CD8-positive, alpha-beta T cell (primary cell): ENCODE measurements at regions of chr3 and their contacts with region 1.

Region 1: DNA sequence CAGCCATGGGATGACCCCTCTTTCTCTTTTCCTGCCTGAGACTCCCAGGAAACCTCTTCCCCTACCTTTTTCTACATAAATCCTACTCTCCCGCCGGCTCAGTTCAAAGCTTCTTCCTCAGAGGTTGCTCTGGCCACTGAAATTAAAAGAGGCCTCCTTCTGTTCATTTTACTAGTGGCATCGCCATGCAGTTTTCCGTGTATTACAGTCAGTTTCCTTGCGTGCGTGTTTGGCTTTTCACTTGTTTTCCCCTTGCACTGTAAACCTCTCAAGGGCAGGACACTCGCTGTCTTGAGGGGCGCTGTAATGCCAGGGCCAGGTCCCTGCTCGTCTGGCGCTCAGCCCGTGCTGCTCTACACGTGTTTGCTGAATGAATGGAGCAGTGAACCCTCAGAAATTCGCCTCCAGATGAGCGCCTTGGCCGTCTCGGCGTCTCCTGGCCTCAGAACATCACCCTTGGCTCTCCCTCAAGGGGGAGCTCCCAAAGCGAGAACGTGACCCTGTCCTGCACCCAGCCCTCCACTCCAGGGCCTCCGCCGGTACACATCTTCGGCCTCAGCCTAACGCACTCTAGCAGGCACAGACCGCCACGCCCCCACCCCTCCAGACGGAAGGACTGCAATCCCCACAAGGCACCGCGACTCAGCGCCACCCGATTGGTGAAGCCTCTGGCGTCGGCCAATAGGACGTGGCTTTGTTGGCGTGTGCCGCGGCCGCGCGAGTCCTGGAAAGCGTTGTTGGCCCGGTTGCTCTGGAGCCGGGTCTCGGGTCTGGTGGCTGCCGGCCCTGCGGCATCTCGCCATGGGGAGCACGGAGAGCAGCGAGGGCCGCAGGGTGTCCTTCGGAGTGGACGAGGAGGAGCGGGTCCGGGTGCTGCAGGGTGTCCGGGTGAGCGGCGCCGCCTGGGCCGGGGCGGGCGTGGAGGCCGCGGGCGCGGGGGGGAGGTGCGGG is at the start of gene CHCHD6:
- DNase-seq: peak; percentile 92 to 99 (median 96)
- ATAC-seq: peak; percentile 93
- H3K4me3 ChIP-seq: peak within 1 kb of the TSS; percentile 74 to 75
- H3K4me3 Mint-ChIP-seq: peak within 1 kb of the TSS; percentile 98
- H3K27ac ChIP-seq: peak within 1 kb of the TSS in 1 of 2 experiments; percentile 36
- H3K27ac Mint-ChIP-seq: peak within 1 kb of the TSS; percentile 88
- H3K4me1 ChIP-seq: peaks cover 17% of the 10 kb centered on the region
- H3K4me1 Mint-ChIP-seq: peaks cover 22% of the 10 kb centered on the region
- H3K27me3 ChIP-seq: no peaks in the 10 kb centered on the region
- H3K27me3 Mint-ChIP-seq: peaks cover 15% of the 10 kb centered on the region
- CTCF ChIP-seq: no peak
- total RNA-seq, gene CHCHD6: 6.2 to 6.4 TPM

Region 2: GRCh38 chr3:125594581-125595011 is 1109.2 kb before region 1 on chr3:
- CTCF ChIA-PET with region 1: no interaction called
- POLR2A ChIA-PET with region 1: no interaction called
- intact Hi-C with region 1: loop called in 1 of 2 experiments (anchors 2 kb)
- DNase-seq: peak in 2 of 9 experiments; percentile 6 to 17
- ATAC-seq: no peak
- H3K4me3 ChIP-seq: peak overlapping the region; percentile 85 to 91
- H3K4me3 Mint-ChIP-seq: peak overlapping the region; percentile 92
- H3K27ac ChIP-seq: peak overlapping the region; percentile 68 to 87
- H3K27ac Mint-ChIP-seq: peak overlapping the region; percentile 77
- H3K4me1 ChIP-seq: peaks cover 16% of the 10 kb centered on the region
- H3K4me1 Mint-ChIP-seq: peaks cover 44% of the 10 kb centered on the region
- H3K27me3 ChIP-seq: no peaks in the 10 kb centered on the region
- H3K27me3 Mint-ChIP-seq: no peaks in the 10 kb centered on the region
- CTCF ChIP-seq: no peak

Region 3: DNA sequence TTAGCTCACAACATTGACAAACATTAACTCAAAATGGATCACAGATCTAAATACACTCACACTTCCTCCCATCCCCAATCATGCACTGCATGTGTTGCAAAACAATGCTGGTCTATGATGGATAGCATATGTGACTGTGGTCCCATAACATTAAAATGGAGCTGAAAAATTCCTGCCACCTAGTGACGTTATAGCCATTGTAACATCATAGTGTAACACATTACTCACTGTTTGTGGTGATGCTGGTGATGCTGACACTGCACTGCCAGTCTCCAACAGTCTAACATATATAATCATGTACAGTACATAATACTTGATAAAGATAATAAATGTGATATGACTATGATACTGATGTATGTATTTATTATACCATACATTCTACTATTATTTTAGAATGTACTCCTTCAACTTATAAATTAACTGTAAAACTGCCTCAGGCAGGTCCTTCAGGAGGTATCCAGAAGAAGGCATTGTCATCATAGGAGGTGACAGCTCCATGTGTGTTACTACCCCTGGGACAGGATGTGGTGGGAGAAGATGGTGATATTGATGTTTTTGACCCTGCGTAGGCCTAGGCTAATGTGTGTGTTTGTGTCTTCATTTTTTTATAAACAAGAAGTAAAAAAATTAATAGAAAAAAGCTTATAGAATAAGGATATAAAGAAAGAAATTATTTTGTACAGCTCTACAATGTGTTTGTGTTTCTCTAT is 90.2 kb before region 1 on chr3:
- CTCF ChIA-PET with region 1: no interaction called
- POLR2A ChIA-PET with region 1: no interaction called
- intact Hi-C with region 1: no loop called
- DNase-seq: peak in 2 of 9 experiments; percentile 19 to 64
- ATAC-seq: peak; percentile 69
- H3K4me3 ChIP-seq: no peak overlapping the region
- H3K4me3 Mint-ChIP-seq: peak overlapping the region; percentile 6
- H3K27ac ChIP-seq: no peak overlapping the region
- H3K27ac Mint-ChIP-seq: peak overlapping the region; percentile 58
- H3K4me1 ChIP-seq: peaks cover 20% of the 10 kb centered on the region
- H3K4me1 Mint-ChIP-seq: peaks cover 23% of the 10 kb centered on the region
- H3K27me3 ChIP-seq: no peaks in the 10 kb centered on the region
- H3K27me3 Mint-ChIP-seq: no peaks in the 10 kb centered on the region
- CTCF ChIP-seq: no peak

Region 4: GRCh38 chr3:126654571-126655383 is 49.0 kb before region 1 on chr3 and contains the start of gene TXNRD3:
- CTCF ChIA-PET with region 1: no interaction called
- POLR2A ChIA-PET with region 1: no interaction called
- intact Hi-C with region 1: loop called in 1 of 2 experiments (anchors 1 kb)
- DNase-seq: peak; percentile 52 to 87 (median 78)
- ATAC-seq: peak; percentile 97
- H3K4me3 ChIP-seq: peak within 1 kb of the TSS; percentile 35 to 58
- H3K4me3 Mint-ChIP-seq: peak within 1 kb of the TSS; percentile 88
- H3K27ac ChIP-seq: peak within 1 kb of the TSS in 1 of 2 experiments; percentile 27
- H3K27ac Mint-ChIP-seq: peak within 1 kb of the TSS; percentile 55
- H3K4me1 ChIP-seq: peaks cover 3% of the 10 kb centered on the region
- H3K4me1 Mint-ChIP-seq: peaks cover 10% of the 10 kb centered on the region
- H3K27me3 ChIP-seq: no peaks in the 10 kb centered on the region
- H3K27me3 Mint-ChIP-seq: no peaks in the 10 kb centered on the region
- CTCF ChIP-seq: no peak
- total RNA-seq, gene TXNRD3: 1.6 to 1.7 TPM

Region 5: GRCh38 chr3:127544192-127544802 is 840.5 kb after region 1 on chr3:
- CTCF ChIA-PET with region 1: no interaction called
- POLR2A ChIA-PET with region 1: no interaction called
- intact Hi-C with region 1: loop called in 1 of 2 experiments (anchors 1 kb)
- DNase-seq: peak; percentile 26 to 77 (median 66)
- ATAC-seq: peak; percentile 44
- H3K4me3 ChIP-seq: no peak overlapping the region
- H3K4me3 Mint-ChIP-seq: no peak overlapping the region
- H3K27ac ChIP-seq: no peak overlapping the region
- H3K27ac Mint-ChIP-seq: no peak overlapping the region
- H3K4me1 ChIP-seq: peaks cover 11% of the 10 kb centered on the region
- H3K4me1 Mint-ChIP-seq: peaks cover 11% of the 10 kb centered on the region
- H3K27me3 ChIP-seq: no peaks in the 10 kb centered on the region
- H3K27me3 Mint-ChIP-seq: no peaks in the 10 kb centered on the region
- CTCF ChIP-seq: peak; percentile 80

Region 6: DNA sequence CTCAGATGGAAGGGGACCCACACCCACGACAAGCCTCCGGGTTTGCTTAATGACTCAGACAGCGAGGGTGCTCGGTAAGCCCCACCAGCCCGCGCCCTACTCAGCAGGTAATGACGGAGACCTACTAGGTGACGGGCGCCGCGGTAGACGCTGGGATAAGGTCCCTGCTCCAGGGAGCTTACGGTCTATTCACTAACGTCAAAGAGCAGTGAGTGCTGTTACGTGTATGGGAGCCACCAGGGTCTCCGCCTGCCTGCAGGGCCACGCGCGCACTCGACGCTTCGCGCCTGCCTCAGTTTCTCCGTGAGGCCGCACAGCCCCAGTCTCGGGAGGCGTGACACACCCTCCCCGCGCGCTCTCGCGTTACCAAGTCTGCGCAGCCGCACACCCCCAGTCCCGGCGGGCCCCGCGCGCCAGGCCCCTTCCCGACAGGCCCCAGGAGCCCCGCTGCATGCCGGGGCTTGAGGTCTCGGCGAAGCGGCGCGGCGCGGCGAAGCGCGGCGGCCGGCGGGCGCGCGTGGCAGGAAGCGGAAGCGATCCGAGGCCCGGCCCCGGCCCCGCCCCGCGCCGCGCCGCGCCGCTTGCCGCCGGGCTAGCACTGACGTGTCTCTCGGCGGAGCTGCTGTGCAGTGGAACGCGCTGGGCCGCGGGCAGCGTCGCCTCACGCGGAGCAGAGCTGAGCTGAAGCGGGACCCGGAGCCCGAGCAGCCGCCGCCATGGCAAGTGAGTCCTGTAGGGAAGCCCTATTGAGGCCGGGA is 1348.2 kb after region 1 on chr3 and contains the start of gene SEC61A1:
- CTCF ChIA-PET with region 1: no interaction called
- POLR2A ChIA-PET with region 1: no interaction called
- intact Hi-C with region 1: loop called (anchors 1 to 2 kb)
- DNase-seq: peak; percentile 87 to 97 (median 95)
- ATAC-seq: peak; percentile 93
- H3K4me3 ChIP-seq: peak within 1 kb of the TSS; percentile 92 to 95
- H3K4me3 Mint-ChIP-seq: peak within 1 kb of the TSS; percentile 99
- H3K27ac ChIP-seq: peak within 1 kb of the TSS; percentile 78 to 85
- H3K27ac Mint-ChIP-seq: peak within 1 kb of the TSS; percentile 98
- H3K4me1 ChIP-seq: peaks cover 35% of the 10 kb centered on the region
- H3K4me1 Mint-ChIP-seq: peaks cover 43% of the 10 kb centered on the region
- H3K27me3 ChIP-seq: no peaks in the 10 kb centered on the region
- H3K27me3 Mint-ChIP-seq: no peaks in the 10 kb centered on the region
- CTCF ChIP-seq: no peak
- total RNA-seq, gene SEC61A1: 125 to 131 TPM